CD8-positive, alpha-beta T cell (primary cell): ENCODE measurements at regions of chr9 and their contacts with region 1.

Region 1: DNA sequence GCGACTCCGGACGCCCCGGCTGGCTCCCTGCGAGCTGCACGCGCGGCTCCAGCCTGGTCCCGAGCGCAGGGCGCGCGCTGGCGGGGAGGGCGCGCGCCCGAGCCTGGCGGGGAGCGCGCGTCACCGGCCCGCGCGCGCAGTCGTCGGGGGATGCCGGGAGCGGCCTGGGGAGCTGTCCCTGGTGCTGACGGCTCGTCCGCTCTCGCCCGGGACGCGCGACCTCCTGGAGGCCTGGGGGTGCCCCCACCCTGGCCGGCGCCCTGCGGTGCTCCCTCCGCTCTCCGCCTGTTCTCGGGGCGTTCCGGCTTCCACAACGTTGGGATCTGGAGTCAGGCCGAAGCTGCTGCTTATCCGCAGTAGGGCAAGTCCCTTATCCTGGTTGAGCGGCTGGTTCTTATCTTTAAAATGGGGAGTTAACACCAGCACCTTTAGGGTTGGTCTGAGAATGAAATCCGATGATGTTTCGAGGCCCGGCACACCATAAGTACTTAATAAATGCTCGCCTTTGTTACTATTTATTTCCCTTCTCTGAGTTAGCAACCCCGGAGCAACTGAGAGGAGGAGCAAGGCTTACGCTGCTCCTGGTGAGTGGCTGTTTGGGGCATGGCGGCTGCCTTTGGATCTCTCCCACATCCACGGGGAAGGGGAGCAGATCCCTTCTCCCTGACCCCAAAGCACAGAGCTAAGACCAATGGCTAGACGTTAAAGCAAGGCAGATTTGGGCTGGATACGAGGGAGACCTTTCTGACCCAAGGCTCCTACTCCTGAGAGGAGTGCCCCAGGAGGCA is at the start of gene FAM163B:
- DNase-seq: peak in 8 of 9 experiments; percentile 7 to 73 (median 37)
- ATAC-seq: peak; percentile 54
- H3K4me3 ChIP-seq: no peak within 1 kb of the TSS
- H3K4me3 Mint-ChIP-seq: no peak within 1 kb of the TSS
- H3K27ac ChIP-seq: no peak within 1 kb of the TSS
- H3K27ac Mint-ChIP-seq: no peak within 1 kb of the TSS
- H3K4me1 ChIP-seq: peaks cover 7% of the 10 kb centered on the region
- H3K4me1 Mint-ChIP-seq: peaks cover 9% of the 10 kb centered on the region
- H3K27me3 ChIP-seq: peaks cover 0 to 4% of the 10 kb centered on the region in 2 experiments
- H3K27me3 Mint-ChIP-seq: peaks cover 40% of the 10 kb centered on the region
- CTCF ChIP-seq: no peak
- total RNA-seq, gene FAM163B: not detected

Region 2: DNA sequence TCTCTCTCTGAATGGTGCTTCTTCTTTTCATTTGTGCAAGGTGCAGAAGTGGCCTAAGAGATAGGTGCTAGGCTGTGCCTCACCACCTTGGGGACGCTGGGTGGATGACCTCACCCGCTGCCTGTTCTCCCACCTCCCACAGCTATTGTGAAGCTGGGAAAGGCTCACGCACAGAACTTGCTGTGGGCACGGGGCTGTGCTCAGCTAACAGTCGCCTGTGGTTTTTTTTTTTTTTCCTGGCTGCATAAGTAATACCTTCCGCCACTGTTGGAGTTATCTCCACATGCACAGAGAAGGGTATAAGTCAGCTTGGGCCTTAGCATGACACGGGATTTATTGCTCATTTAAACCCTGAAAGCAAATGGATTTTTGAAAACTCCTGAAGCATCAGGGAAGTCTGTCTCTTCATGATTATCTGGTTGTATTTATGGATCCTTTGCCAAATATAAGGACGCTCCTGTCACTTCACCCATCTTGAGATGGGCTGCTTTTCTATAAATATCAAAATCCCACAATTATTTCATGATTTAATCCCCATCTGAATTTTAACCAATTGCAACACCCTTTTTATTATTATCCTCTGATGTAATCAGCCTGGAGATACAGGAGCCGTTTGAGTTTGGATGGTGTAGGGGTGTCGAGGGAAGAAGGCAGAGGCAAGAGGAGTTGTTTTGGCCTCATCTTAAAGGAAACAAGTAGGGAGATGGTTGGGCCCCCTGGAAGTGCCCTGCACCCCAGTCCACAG is 35.7 kb after region 1 on chr9:
- CTCF ChIA-PET with region 1: no interaction called
- POLR2A ChIA-PET with region 1: no interaction called
- intact Hi-C with region 1: loop called in 1 of 2 experiments (anchors 5 kb)
- DNase-seq: no peak
- ATAC-seq: no peak
- H3K4me3 ChIP-seq: no peak overlapping the region
- H3K4me3 Mint-ChIP-seq: no peak overlapping the region
- H3K27ac ChIP-seq: no peak overlapping the region
- H3K27ac Mint-ChIP-seq: no peak overlapping the region
- H3K4me1 ChIP-seq: no peaks in the 10 kb centered on the region
- H3K4me1 Mint-ChIP-seq: peaks cover 2% of the 10 kb centered on the region
- H3K27me3 ChIP-seq: no peaks in the 10 kb centered on the region
- H3K27me3 Mint-ChIP-seq: peaks cover 6% of the 10 kb centered on the region
- CTCF ChIP-seq: no peak